Gastrocnemius medialis (tissue), 4 donors: ENCODE measurements at regions of chr1 and their contacts with region 1.

Region 1: DNA sequence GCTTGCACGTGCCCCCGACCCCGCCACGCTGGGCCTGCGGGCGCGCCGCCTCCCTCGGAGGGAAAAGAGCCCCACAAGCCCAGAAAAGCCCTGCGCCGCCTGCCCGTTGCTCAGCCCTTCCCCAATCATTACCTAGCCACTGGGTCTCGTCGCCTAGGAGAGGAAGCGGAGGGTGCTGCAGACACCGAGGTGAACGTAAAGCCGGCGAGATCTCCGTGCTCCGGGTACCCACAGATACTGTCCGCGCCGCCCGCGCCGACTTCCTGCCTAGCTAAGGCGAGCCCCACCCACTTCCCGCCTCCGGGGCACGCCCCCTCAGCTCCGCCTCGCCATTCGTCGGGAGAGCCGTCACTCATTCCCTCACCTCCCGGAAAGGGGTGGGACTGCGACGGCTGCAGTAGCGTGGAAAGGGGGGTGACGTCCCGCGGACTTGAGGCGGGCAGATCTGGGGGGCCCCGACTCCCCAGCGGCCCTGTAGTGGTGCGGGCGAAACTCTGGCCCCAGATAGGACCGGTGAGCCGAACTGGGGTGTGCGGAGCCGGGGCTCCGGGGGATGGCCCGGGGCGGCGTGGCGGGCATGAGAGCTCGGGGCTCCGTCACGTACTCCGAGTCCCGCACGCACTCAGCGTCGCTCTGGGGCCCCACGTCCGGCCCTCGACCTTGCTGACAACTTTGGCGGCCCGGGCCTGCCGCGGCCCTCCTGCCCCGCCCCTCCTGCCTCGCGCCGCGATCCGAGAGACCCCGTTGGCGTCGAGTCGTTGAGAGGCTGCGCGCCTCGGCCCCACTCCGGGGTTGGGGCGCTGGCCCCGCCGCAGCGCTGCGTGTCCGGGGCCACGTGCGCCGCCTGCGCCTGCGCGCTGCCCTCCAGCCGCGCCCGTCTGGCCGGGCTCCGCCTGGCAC is at the start of gene ENO1:
- DNase-seq: peak; percentile 97 to 98
- ATAC-seq: peak; percentile 83 to 87
- H3K4me3 ChIP-seq: peak within 1 kb of the TSS; percentile 63 to 92 (median 76)
- H3K27ac ChIP-seq: peak within 1 kb of the TSS; percentile 96 to 98 (median 97)
- H3K4me1 ChIP-seq: peaks cover 47 to 48% of the 10 kb centered on the region in 2 donors
- H3K27me3 ChIP-seq: no peaks in the 10 kb centered on the region
- CTCF ChIP-seq: peak in 2 of 5 experiments; percentile 21 to 33
- POLR2A ChIP-seq: peak; percentile 99
- total RNA-seq, gene ENO1: 112 to 354 (median 209) TPM

Region 2: DNA sequence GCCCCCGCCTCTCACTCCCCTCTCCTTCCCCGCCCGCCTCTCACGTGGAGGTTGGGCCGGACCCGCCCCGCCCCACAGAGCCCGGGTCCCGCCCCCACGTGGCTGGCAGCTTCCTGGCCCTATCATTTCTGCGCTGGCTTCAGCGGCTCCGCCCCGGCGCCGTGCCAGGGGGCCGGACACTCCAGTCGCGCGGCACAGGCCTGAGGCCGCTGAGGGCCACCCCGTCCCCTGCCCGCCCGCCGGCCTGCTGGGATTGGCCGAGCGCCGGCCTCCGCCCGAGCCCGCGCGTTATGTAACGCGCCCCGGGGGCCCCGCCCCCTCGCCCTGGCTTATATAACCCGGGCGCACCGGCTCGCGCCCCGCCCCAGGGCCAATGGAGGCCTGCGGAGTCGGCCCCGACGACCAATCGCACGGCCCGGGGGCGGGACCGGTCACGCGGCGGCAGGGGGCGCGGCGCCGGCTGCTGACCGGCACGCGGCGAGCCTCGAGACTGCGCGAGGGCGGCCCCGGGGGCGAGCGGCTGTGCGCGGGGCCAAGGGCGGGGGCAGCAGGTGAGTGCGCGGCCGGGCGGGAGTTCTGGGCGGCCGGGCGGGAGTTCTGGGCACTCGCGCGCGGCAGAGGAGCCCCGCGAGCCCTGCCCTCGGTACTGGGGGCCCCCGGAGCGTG is 1094.7 kb before region 1 on chr1 and contains the start of gene PER3:
- in situ Hi-C with region 1: no loop called
- intact Hi-C with region 1: loop called (anchors 5 kb)
- DNase-seq: peak; percentile 93 to 98
- ATAC-seq: peak; percentile 86 to 87
- H3K4me3 ChIP-seq: peak within 1 kb of the TSS; percentile 71 to 80 (median 78)
- H3K27ac ChIP-seq: peak within 1 kb of the TSS; percentile 95 to 98 (median 98)
- H3K4me1 ChIP-seq: peaks cover 15 to 26% of the 10 kb centered on the region in 2 donors
- H3K27me3 ChIP-seq: no peaks in the 10 kb centered on the region
- CTCF ChIP-seq: peak in 2 of 5 experiments; percentile 12 to 59
- POLR2A ChIP-seq: peak; percentile 94 to 96
- total RNA-seq, gene PER3: 3.7 to 7.1 (median 5.5) TPM

Region 3: GRCh38 chr1:7961216-7962015 is 917.3 kb before region 1 on chr1 and contains the start of gene PARK7:
- in situ Hi-C with region 1: no loop called
- intact Hi-C with region 1: loop called (anchors 10 kb)
- DNase-seq: peak; percentile 99 to 100
- ATAC-seq: peak; percentile 84 to 91
- H3K4me3 ChIP-seq: peak within 1 kb of the TSS; percentile 73 to 93 (median 84)
- H3K27ac ChIP-seq: peak within 1 kb of the TSS; percentile 91 to 98 (median 96)
- H3K4me1 ChIP-seq: peaks cover 43 to 45% of the 10 kb centered on the region in 2 donors
- H3K27me3 ChIP-seq: no peaks in the 10 kb centered on the region
- CTCF ChIP-seq: peak; percentile 32 to 65 (median 58)
- POLR2A ChIP-seq: peak; percentile 93 to 96
- total RNA-seq, gene PARK7: 291 to 370 (median 332) TPM

Region 4: DNA sequence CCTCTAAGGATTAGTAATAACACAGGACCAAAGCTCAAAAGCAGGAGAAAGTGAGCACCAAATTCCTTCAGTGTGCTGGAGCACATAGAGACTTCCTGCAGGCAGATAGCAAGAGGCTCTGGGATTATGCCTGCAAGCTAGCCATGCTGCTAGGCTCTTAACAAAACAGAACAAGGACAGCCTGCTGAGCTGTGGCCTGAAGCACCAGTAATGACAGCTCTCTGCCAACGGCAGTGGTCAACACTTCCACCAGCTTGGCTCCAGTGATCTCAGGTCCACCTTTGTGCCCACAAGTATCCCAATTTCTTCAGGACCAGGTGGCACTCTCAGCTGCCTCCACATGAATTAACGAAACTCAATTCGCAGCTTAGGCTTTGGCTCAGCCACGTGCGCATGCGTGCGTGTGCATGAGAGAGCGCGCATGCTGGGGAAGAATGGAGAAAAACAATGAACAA is 496.6 kb before region 1 on chr1:
- in situ Hi-C with region 1: no loop called
- intact Hi-C with region 1: loop called (anchors 5 kb)
- DNase-seq: no peak
- ATAC-seq: no peak
- H3K4me3 ChIP-seq: no peak overlapping the region
- H3K27ac ChIP-seq: peak overlapping the region; percentile 90 to 95 (median 93)
- H3K4me1 ChIP-seq: peaks cover 98 to 99% of the 10 kb centered on the region in 2 donors
- H3K27me3 ChIP-seq: no peaks in the 10 kb centered on the region
- CTCF ChIP-seq: no peak
- POLR2A ChIP-seq: no peak

Region 5: DNA sequence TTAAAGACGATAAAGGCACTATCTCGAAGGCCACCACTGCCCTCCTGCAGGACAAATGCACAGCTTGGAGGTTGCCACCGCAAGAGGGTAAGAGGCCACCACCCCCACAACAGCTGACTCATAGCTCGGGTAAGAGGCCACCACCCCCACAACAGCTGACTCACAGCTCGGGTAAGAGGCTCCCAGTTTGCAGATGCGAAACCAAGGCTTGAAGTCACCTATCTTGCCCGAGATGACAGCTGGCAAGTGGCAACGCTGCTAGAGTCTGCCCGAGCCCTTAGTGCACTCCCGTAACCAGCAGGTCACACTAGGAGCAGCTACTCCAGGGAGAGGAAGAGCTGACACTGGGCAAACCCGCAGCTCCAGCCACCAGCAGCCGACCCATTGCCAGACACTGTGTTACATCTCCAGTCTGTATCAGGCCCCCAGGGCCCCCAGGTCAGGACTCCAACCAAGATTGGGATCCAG is 396.9 kb after region 1 on chr1:
- in situ Hi-C with region 1: no loop called
- intact Hi-C with region 1: no loop called
- DNase-seq: peak; percentile 76 to 80
- ATAC-seq: peak; percentile 70 to 82
- H3K4me3 ChIP-seq: no peak overlapping the region
- H3K27ac ChIP-seq: peak overlapping the region; percentile 49 to 72 (median 67)
- H3K4me1 ChIP-seq: peaks cover 6 to 17% of the 10 kb centered on the region in 2 donors
- H3K27me3 ChIP-seq: no peaks in the 10 kb centered on the region
- CTCF ChIP-seq: no peak
- POLR2A ChIP-seq: peak in 1 of 2 donors; percentile 31